Heart right ventricle (tissue), 16 donors: ENCODE measurements at regions of chr1 and their contacts with region 1.

Region 1: GRCh38 chr1:6784560-6785317 is 515 bp upstream of the CAMTA1 start:
- DNase-seq: peak; percentile 99 to 100
- ATAC-seq: peak; percentile 90 to 97 (median 96)
- H3K4me3 ChIP-seq: peak overlapping the region; percentile 70 to 100 (median 80)
- H3K27ac ChIP-seq: peak overlapping the region; percentile 96 to 100 (median 98)
- H3K4me1 ChIP-seq: peaks cover 5 to 49% (median 39%) of the 10 kb centered on the region in 9 donors
- H3K27me3 ChIP-seq: no peaks in the 10 kb centered on the region
- CTCF ChIP-seq: no peak

Region 2: DNA sequence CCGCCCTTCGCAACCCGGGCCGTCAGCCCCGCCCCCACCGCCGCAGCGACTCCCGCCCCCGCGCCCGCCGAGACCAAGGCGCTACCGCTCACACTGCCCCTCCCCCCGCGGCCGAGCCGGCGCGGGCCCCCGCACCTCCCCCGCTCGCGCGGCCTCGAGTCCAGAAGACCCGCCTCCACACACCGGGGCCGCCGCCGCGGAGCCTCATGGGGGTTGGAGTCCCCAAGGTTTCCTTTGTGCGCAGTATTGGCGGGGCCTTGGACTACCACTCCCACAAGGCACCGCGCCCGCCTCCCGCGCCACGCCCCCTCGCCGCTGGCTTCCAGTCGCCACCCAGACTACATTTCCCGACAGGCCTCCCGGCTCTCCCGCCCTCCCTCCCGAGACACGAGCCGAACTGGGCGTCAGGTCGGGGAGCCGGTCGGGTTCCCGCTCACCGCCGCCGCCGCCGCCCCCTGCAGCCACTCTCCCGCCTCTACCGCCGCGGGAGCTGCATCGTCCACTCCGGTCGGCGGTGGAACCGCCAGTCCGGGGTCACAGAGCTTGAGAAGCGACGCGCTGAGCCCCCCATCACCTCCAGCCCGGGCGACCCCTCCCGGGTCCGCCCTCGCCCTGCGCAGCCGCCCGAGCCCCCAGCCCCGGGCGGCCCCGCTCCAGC is 171.2 kb before region 1 on chr1 and contains the start of gene PHF13:
- intact Hi-C with region 1: loop called in 1 of 10 experiments (anchors 10 kb)
- DNase-seq: peak; percentile 99 to 100
- ATAC-seq: peak; percentile 97 to 99 (median 98)
- H3K4me3 ChIP-seq: peak within 1 kb of the TSS; percentile 68 to 100 (median 98)
- H3K27ac ChIP-seq: peak within 1 kb of the TSS; percentile 93 to 99 (median 96)
- H3K4me1 ChIP-seq: peaks cover 2 to 57% (median 24%) of the 10 kb centered on the region in 9 donors
- H3K27me3 ChIP-seq: peaks cover 0 to 7% (median 0%) of the 10 kb centered on the region in 7 donors
- CTCF ChIP-seq: no peak
- total RNA-seq, gene PHF13: 5.9 to 12.2 (median 8.0) TPM

Region 3: DNA sequence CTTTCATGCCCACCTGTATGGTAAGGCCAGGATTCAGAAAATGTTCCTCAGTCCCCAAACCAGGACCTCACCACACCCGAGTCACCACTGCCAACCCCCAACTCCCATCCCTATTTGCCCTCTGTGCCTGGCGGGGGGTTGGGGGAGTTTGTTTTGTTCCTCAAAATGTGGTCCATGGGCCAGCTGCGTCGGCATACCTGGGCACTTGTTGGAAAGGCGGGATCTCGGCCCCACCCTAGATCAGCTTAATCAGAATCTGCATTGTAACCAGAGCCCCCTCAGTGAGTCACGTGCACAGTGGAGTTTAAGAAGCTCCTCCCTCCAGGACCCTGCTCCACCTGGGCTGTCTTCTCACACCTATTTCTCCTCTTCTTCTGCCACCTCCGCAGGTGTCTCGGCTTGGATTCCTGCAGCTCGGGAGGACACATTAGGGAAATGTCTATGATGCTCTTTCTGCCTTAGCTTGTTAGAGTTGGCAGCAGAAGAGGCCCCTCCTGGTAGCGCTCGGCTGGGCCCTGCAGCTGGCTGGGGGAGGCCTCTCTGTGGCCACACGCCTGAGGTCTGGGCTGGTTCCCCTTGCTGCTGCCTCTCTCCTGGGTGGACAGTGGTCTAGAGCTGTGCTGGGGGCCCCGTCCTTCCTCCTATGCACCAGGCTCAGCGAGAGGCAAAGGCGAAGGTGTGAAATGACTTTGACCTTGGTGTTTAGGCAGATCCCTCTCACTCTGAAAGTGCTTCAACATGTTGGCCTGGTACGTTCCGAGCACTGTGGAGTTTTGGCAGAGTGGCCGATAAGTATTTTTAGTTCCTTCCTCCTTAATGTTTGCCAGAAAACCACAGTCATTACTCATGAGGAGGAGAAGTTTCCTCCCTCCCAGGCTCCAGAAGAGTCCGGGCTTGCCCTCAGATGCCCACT is 41.3 kb before region 1 on chr1:
- intact Hi-C with region 1: loop called in 3 of 10 experiments (anchors 5 kb)
- DNase-seq: peak; percentile 37 to 70
- ATAC-seq: peak; percentile 91 to 97 (median 94)
- H3K4me3 ChIP-seq: peak overlapping the region in 3 of 10 donors; percentile 0 to 17 (median 13)
- H3K27ac ChIP-seq: peak overlapping the region; percentile 33 to 93 (median 82)
- H3K4me1 ChIP-seq: peaks cover 6 to 19% (median 15%) of the 10 kb centered on the region in 9 donors
- H3K27me3 ChIP-seq: no peaks in the 10 kb centered on the region
- CTCF ChIP-seq: no peak